Dorsolateral prefrontal cortex (tissue), 120 donors: ENCODE measurements at regions of chr2 and their contacts with region 1.

Region 1: GRCh38 chr2:66434679-66435548 is at the start of gene MEIS1:
- DNase-seq: peak; percentile 80 to 95 (median 92)
- H3K4me3 ChIP-seq: peak within 1 kb of the TSS; percentile 53 to 93 (median 77)
- H3K27ac ChIP-seq: peak within 1 kb of the TSS; percentile 51 to 97 (median 91)
- H3K27me3 ChIP-seq: peaks cover 0 to 37% (median 1%) of the 10 kb centered on the region in 45 donors
- CTCF ChIP-seq: peak in 15 of 56 donors; percentile 3 to 20 (median 11)
- total RNA-seq, gene MEIS1: 6.7 to 51.0 (median 18.0) TPM

Region 2: DNA sequence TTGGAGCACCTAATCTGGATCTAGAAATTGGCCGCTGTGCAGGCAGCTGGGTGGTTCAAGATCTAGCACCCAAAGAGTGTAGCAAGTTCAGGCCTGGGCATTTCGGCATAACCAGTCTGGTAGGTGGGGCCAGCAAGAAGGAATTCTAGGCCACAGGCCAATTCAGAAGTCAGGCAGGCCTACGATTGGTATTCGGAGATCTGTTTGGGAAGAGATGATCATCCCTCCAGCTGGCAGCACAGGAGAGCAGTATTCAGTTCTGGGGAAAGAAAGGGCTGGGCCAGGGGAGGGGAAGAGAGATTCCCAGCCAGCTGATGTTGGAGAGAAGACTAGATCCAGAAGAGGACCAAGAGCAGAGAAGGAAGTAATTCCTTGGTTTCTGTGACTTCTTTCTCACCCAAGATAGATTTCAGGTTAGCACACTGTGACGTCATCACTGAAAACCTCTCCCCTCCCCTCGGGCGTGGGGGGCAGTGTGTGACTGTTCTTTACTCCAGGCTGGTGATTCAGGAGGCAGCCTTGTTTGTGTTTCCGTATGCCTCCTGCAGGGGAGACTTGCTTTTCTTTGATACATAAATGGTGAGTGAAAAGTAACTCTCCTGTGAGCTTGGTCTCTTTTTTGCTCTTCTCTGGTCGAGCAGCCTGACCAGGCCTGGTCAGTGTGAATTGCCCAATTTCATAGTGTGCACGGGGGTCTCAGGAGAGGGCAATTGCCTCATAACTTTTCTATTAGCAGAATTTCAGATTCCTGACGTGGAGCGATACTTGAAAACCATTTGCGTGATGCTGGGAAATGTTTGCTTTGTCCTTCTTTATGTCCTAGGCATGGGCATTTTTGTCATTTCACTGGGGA is 61.1 kb after region 1 on chr2:
- intact Hi-C with region 1: loop called (anchors 5 kb)
- DNase-seq: peak in 1 of 10 donors; percentile 53
- H3K4me3 ChIP-seq: no peak overlapping the region
- H3K27ac ChIP-seq: peak overlapping the region in 39 of 59 donors; percentile 4 to 78 (median 41)
- H3K27me3 ChIP-seq: no peaks in the 10 kb centered on the region
- CTCF ChIP-seq: peak in 5 of 56 donors; percentile 5 to 26 (median 12)

Region 3: GRCh38 chr2:66541646-66542045 is 106.7 kb after region 1 on chr2:
- intact Hi-C with region 1: loop called in 1 of 2 experiments (anchors 10 kb)
- DNase-seq: peak in 5 of 10 donors; percentile 20 to 74 (median 57)
- H3K4me3 ChIP-seq: peak overlapping the region in 29 of 59 donors; percentile 1 to 50 (median 17)
- H3K27ac ChIP-seq: peak overlapping the region; percentile 8 to 95 (median 86)
- H3K27me3 ChIP-seq: no peaks in the 10 kb centered on the region
- CTCF ChIP-seq: peak in 2 of 56 donors; percentile 4 to 20

Region 4: GRCh38 chr2:66555501-66556324 is 120.8 kb after region 1 on chr2:
- intact Hi-C with region 1: loop called in 1 of 2 experiments (anchors 2 kb)
- DNase-seq: peak in 1 of 10 donors; percentile 32
- H3K4me3 ChIP-seq: peak overlapping the region; percentile 7 to 69 (median 47)
- H3K27ac ChIP-seq: peak overlapping the region in 56 of 59 donors; percentile 12 to 91 (median 74)
- H3K27me3 ChIP-seq: peaks cover 0 to 11% (median 0%) of the 10 kb centered on the region in 45 donors
- CTCF ChIP-seq: no peak

Region 5: GRCh38 chr2:66574701-66575624 is 140.0 kb after region 1 on chr2:
- intact Hi-C with region 1: loop called (anchors 2 kb)
- DNase-seq: peak in 5 of 10 donors; percentile 55 to 80 (median 69)
- H3K4me3 ChIP-seq: peak overlapping the region; percentile 24 to 72 (median 52)
- H3K27ac ChIP-seq: peak overlapping the region in 39 of 59 donors; percentile 21 to 89 (median 67)
- H3K27me3 ChIP-seq: peaks cover 15 to 71% (median 50%) of the 10 kb centered on the region in 45 donors
- CTCF ChIP-seq: peak in 55 of 56 donors; percentile 15 to 75 (median 53)

Region 6: GRCh38 chr2:67840460-67841068 is 1405.7 kb after region 1 on chr2:
- intact Hi-C with region 1: loop called in 1 of 2 experiments (anchors 10 kb)
- DNase-seq: peak in 9 of 10 donors; percentile 31 to 69 (median 47)
- H3K4me3 ChIP-seq: no peak overlapping the region
- H3K27ac ChIP-seq: no peak overlapping the region
- H3K27me3 ChIP-seq: peaks cover 0 to 5% (median 0%) of the 10 kb centered on the region in 45 donors
- CTCF ChIP-seq: peak in 55 of 56 donors; percentile 26 to 79 (median 58)

Region 7: DNA sequence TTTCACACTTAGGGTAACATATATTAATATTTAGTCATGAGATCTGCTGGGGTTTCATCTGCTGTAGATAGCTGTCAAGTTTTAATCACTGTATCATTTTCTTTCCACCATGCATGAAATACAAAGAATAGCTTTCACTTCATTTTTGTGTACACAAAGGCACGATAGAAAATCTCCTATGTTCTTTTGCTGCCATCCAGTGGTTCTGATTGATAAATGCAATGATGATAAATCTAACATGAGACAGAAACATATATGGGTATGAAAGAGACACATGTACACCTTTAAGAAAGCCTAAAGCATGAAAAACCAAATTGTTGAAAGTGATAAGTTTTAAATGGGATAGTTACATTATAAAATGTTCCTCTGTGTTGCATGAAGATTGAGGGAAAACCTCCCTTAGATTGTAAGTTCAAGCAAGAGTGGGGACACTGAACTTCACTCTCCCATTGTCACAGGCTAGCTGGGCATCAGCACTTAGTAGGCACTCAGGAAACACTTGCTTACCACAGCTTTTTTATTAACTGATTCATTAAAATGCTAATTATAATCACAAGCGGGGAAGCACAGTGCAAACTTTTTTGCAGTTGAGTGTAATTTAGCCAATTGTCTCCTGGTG is 1596.7 kb after region 1 on chr2:
- intact Hi-C with region 1: loop called in 1 of 2 experiments (anchors 10 kb)
- DNase-seq: no peak
- H3K4me3 ChIP-seq: peak overlapping the region in 9 of 59 donors; percentile 6 to 41 (median 25)
- H3K27ac ChIP-seq: peak overlapping the region in 1 of 59 donors; percentile 9
- H3K27me3 ChIP-seq: peaks cover 0 to 3% (median 0%) of the 10 kb centered on the region in 45 donors
- CTCF ChIP-seq: peak; percentile 35 to 93 (median 76)